Calu3 (cell line): ENCODE measurements at regions of chr3 and their contacts with region 1.

Region 1: GRCh38 chr3:27681245-27681748 is 40.8 kb downstream of the EOMES start:
- DNase-seq: peak; percentile 57
- H3K4me3 Mint-ChIP-seq: peak overlapping the region; percentile 59
- H3K27ac Mint-ChIP-seq: peak overlapping the region; percentile 92
- H3K4me1 Mint-ChIP-seq: peaks cover 34% of the 10 kb centered on the region
- H3K27me3 Mint-ChIP-seq: no peaks in the 10 kb centered on the region
- CTCF ChIP-seq: peak; percentile 33

Region 2: DNA sequence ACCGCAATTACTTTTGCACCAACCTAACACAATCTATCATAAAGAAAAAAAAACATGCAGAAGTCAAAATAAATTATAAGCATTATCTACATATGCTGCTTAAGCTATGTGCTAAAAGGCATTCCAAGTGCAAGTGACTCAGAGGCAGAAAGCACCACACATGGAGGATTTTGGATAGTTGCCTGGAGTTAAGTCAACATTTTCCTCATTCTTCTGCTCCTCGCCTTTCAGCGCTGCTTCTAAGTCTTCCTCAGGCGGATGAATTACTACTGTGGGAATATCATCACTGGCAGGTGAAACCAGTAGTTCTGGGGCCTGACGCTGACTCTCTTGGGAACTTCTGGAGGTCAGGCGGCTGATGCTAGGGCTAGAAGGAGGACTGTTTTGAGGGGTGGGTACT is 250.2 kb before region 1 on chr3:
- CTCF ChIA-PET with region 1: no interaction called
- intact Hi-C with region 1: loop called (anchors 5 kb)
- DNase-seq: peak; percentile 50
- H3K4me3 Mint-ChIP-seq: no peak overlapping the region
- H3K27ac Mint-ChIP-seq: peak overlapping the region; percentile 33
- H3K4me1 Mint-ChIP-seq: peaks cover 10% of the 10 kb centered on the region
- H3K27me3 Mint-ChIP-seq: no peaks in the 10 kb centered on the region
- CTCF ChIP-seq: no peak

Region 3: GRCh38 chr3:27484015-27484844 is 197.1 kb before region 1 on chr3 and contains the start of gene SLC4A7:
- CTCF ChIA-PET with region 1: interaction called, 5 read pairs
- intact Hi-C with region 1: loop called (anchors 2 kb)
- DNase-seq: peak; percentile 99
- H3K4me3 Mint-ChIP-seq: peak within 1 kb of the TSS; percentile 97
- H3K27ac Mint-ChIP-seq: peak within 1 kb of the TSS; percentile 88
- H3K4me1 Mint-ChIP-seq: peaks cover 12% of the 10 kb centered on the region
- H3K27me3 Mint-ChIP-seq: no peaks in the 10 kb centered on the region
- CTCF ChIP-seq: no peak
- total RNA-seq, gene SLC4A7: 39.0 and 61.6 TPM in 2 replicates

Region 4: GRCh38 chr3:27590437-27591298 is 90.6 kb before region 1 on chr3:
- CTCF ChIA-PET with region 1: no interaction called
- intact Hi-C with region 1: loop called (anchors 5 kb)
- DNase-seq: no peak
- H3K4me3 Mint-ChIP-seq: no peak overlapping the region
- H3K27ac Mint-ChIP-seq: no peak overlapping the region
- H3K4me1 Mint-ChIP-seq: peaks cover 35% of the 10 kb centered on the region
- H3K27me3 Mint-ChIP-seq: no peaks in the 10 kb centered on the region
- CTCF ChIP-seq: no peak